Heart right ventricle (tissue), 16 donors: ENCODE measurements at regions of chr16 and their contacts with region 1.

Region 1: GRCh38 chr16:67490335-67491096 is 7.2 kb upstream of the AGRP start:
- DNase-seq: no peak
- ATAC-seq: no peak
- H3K4me3 ChIP-seq: no peak overlapping the region
- H3K27ac ChIP-seq: peak overlapping the region in 5 of 10 donors; percentile 25 to 82 (median 58)
- H3K4me1 ChIP-seq: peaks cover 2 to 84% (median 16%) of the 10 kb centered on the region in 9 donors
- H3K27me3 ChIP-seq: no peaks in the 10 kb centered on the region
- CTCF ChIP-seq: no peak

Region 2: GRCh38 chr16:67109407-67110135 is 380.9 kb before region 1 on chr16 and contains the start of gene PHAF1:
- intact Hi-C with region 1: no loop called
- DNase-seq: peak; percentile 93 to 96
- ATAC-seq: peak; percentile 98 to 99 (median 98)
- H3K4me3 ChIP-seq: peak within 1 kb of the TSS; percentile 76 to 100 (median 94)
- H3K27ac ChIP-seq: peak within 1 kb of the TSS; percentile 55 to 96 (median 86)
- H3K4me1 ChIP-seq: peaks cover 7 to 56% (median 25%) of the 10 kb centered on the region in 9 donors
- H3K27me3 ChIP-seq: no peaks in the 10 kb centered on the region
- CTCF ChIP-seq: no peak
- total RNA-seq, gene PHAF1: 8.9 to 12.7 (median 11.7) TPM

Region 3: DNA sequence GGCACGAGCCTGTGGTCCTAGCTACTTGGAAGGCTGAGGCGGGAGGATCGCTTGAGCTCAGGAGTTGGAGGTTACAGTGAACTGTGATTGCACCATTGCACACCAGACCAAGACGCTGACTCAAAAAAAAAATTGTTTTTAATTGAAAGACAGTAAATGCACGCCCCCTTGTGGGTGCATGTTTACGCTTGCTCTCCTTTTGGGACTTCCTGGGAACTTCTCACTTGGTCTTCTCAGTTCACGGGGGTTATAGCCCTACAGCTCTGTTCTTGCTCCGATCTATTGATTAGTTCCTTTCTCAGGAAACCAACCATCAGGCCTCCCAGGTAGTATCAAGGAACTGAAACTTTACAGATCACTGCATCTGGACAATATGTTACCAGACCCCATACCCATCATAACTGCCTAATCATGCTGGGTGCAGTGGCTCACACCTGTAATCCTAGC is 23.9 kb after region 1 on chr16:
- intact Hi-C with region 1: loop called in 6 of 10 experiments (anchors 1 to 2 kb)
- DNase-seq: peak; percentile 62 to 83
- ATAC-seq: peak in 7 of 8 donors; percentile 52 to 82 (median 66)
- H3K4me3 ChIP-seq: no peak overlapping the region
- H3K27ac ChIP-seq: no peak overlapping the region
- H3K4me1 ChIP-seq: peaks cover 0 to 25% (median 0%) of the 10 kb centered on the region in 9 donors
- H3K27me3 ChIP-seq: no peaks in the 10 kb centered on the region
- CTCF ChIP-seq: peak; percentile 52 to 82 (median 73)